ENCODE measurements at regions of chr20 and their contacts with region 1.

Region 1: DNA sequence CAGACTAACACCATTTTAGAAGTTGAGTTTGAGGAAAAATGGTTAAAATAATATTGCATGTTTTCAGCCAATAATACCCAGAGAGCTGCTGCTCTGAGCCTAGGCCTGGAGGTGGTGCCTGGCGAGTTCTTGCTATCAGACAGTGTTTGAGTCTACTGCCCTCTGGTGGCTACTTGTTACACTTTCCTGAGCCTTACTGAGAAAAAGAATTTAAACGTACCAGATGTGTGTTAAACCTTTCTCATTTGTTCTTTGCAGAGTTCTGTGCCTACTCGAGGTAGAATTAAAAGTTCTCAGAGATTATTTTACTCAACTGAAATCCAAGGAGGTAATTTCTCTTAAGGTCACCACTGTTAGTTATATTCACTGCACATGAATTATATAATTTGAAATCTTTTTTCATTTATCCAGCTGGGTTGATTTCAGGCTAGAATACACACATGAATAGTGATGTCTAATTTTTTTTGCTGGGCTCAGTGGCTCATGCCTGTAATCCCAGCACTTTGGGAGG is 38.2 kb downstream of the SHLD1 start:
- DNase-seq: peak; percentile 90
- H3K4me3 ChIP-seq: no peak overlapping the region
- H3K27ac ChIP-seq: no peak overlapping the region
- H3K4me1 ChIP-seq: no peaks in the 10 kb centered on the region
- H3K27me3 ChIP-seq: no peaks in the 10 kb centered on the region
- CTCF ChIP-seq: peak; percentile 89

Region 2: GRCh38 chr20:5234158-5234557 is 554.3 kb before region 1 on chr20:
- intact Hi-C with region 1: no loop called
- DNase-seq: no peak
- H3K4me3 ChIP-seq: no peak overlapping the region
- H3K27ac ChIP-seq: no peak overlapping the region
- H3K4me1 ChIP-seq: no peaks in the 10 kb centered on the region
- H3K27me3 ChIP-seq: no peaks in the 10 kb centered on the region
- CTCF ChIP-seq: no peak

Region 3: DNA sequence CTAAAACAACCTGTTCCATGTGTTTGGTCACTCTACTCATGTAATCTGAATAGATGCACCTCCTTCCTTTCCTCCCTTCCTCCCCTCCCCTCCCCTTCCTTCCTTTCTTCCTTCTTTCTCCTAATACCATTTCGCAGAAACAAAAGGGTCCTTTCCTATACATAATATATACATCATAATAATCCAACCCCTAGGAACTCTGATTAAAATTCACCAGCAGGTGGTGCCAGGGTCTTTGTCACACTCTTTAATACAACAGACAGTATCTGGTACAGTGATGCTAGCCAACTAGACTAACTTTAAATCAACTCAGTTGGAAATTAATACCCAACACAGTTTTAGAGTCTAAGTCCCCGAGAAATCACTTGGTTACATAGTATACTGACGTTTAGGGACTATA is 219.4 kb before region 1 on chr20:
- intact Hi-C with region 1: loop called (anchors 5 kb)
- DNase-seq: peak; percentile 70
- H3K4me3 ChIP-seq: no peak overlapping the region
- H3K27ac ChIP-seq: no peak overlapping the region
- H3K4me1 ChIP-seq: no peaks in the 10 kb centered on the region
- H3K27me3 ChIP-seq: no peaks in the 10 kb centered on the region
- CTCF ChIP-seq: peak; percentile 42

Region 4: GRCh38 chr20:5835321-5835821 is 46.9 kb after region 1 on chr20:
- intact Hi-C with region 1: no loop called
- DNase-seq: no peak
- H3K4me3 ChIP-seq: no peak overlapping the region
- H3K27ac ChIP-seq: no peak overlapping the region
- H3K4me1 ChIP-seq: no peaks in the 10 kb centered on the region
- H3K27me3 ChIP-seq: no peaks in the 10 kb centered on the region
- CTCF ChIP-seq: no peak

Region 5: DNA sequence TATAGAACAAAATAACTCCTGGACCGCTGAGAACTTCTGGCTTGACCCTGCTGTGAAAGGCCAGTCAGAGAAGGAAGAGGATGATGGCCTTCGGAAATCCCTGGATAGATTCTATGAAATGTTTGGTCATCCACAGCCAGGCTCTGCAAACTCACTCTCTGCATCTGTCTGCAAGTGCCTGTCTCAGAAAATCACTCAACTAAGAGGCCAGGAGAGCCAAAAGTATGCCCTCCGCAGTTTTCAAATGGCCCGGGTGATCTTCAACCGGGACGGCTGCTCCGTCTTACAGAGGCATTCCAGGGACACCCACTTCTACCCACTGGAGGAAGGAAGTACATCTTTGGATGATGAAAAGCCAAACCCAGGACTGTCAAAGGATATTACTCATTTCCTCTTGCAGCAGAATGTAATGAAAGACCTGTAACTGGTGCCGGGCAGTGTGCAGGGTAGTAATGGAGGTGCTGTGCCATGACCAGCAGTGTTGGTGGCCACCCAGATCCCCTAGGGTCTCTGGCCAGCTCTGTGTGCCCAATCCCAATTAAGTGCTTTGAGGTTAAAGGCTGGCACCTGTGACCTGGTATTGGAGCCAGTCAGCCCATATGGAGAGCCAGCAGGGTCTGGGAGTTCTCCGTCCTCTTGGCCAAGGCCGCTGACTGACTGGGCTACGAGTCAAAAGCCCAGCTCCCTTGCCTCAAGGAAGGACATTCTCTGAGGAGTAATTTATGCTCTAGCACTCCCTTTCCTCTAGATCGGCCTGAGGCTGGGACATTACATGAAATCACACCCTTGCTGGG is 74.8 kb after region 1 on chr20:
- intact Hi-C with region 1: no loop called
- DNase-seq: no peak
- H3K4me3 ChIP-seq: no peak overlapping the region
- H3K27ac ChIP-seq: no peak overlapping the region
- H3K4me1 ChIP-seq: no peaks in the 10 kb centered on the region
- H3K27me3 ChIP-seq: no peaks in the 10 kb centered on the region
- CTCF ChIP-seq: no peak

Measured in colonic mucosa (tissue), 4 donors.